Spleen (tissue), 13 donors: ENCODE measurements at regions of chr10 and their contacts with region 1.

Region 1: DNA sequence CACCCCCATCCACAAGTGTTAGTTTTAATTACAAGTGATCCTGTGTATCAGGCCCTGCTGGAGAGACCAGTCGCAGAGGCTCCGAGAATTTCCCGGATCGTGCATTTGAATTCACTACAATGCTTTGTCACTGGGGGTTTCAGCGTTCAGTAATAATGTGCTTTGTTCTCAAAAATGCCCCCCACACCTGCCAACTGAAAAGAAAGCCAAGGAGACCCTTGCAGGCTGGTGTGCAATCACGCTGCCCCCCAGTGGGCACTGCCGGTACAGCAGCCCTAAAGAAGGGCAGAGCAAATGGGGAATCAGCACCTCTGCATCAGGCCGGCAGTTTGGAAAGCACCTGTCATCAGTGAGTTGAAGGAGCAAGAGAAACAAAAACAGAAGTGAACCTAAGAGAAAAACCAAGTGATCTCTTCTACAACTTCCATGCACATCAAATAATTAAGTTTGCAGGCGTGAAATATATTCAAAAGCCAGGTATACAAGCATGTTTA is 177.6 kb downstream of the PARD3 start:
- DNase-seq: peak; percentile 85
- H3K4me3 ChIP-seq: peak overlapping the region in 1 of 8 donors; percentile 14
- H3K27ac ChIP-seq: no peak overlapping the region
- H3K4me1 ChIP-seq: peaks cover 7 to 29% (median 17%) of the 10 kb centered on the region in 6 donors
- H3K27me3 ChIP-seq: no peaks in the 10 kb centered on the region
- CTCF ChIP-seq: peak; percentile 65 to 94 (median 86)
- POLR2A ChIP-seq: no peak

Region 2: GRCh38 chr10:33180390-33180789 is 1457.1 kb before region 1 on chr10:
- intact Hi-C with region 1: loop called (anchors 10 kb)
- DNase-seq: no peak
- H3K4me3 ChIP-seq: no peak overlapping the region
- H3K27ac ChIP-seq: no peak overlapping the region
- H3K4me1 ChIP-seq: peaks cover 2 to 17% (median 10%) of the 10 kb centered on the region in 6 donors
- H3K27me3 ChIP-seq: peaks cover 0 to 10% (median 0%) of the 10 kb centered on the region in 7 donors
- CTCF ChIP-seq: no peak
- POLR2A ChIP-seq: no peak

Region 3: GRCh38 chr10:34473567-34474391 is 163.7 kb before region 1 on chr10:
- intact Hi-C with region 1: no loop called
- DNase-seq: no peak
- H3K4me3 ChIP-seq: no peak overlapping the region
- H3K27ac ChIP-seq: no peak overlapping the region
- H3K4me1 ChIP-seq: no peaks in the 10 kb centered on the region
- H3K27me3 ChIP-seq: no peaks in the 10 kb centered on the region
- CTCF ChIP-seq: no peak
- POLR2A ChIP-seq: no peak

Region 4: GRCh38 chr10:34522546-34522945 is 114.9 kb before region 1 on chr10:
- intact Hi-C with region 1: loop called (anchors 10 kb)
- DNase-seq: no peak
- H3K4me3 ChIP-seq: peak overlapping the region in 3 of 8 donors; percentile 14 to 49 (median 22)
- H3K27ac ChIP-seq: no peak overlapping the region
- H3K4me1 ChIP-seq: peaks cover 0 to 2% (median 0%) of the 10 kb centered on the region in 6 donors
- H3K27me3 ChIP-seq: no peaks in the 10 kb centered on the region
- CTCF ChIP-seq: peak in 7 of 11 experiments; percentile 28 to 50 (median 30)
- POLR2A ChIP-seq: no peak

Region 5: GRCh38 chr10:34739915-34740314 is 102.5 kb after region 1 on chr10:
- intact Hi-C with region 1: no loop called
- DNase-seq: no peak
- H3K4me3 ChIP-seq: no peak overlapping the region
- H3K27ac ChIP-seq: peak overlapping the region in 1 of 8 donors; percentile 6
- H3K4me1 ChIP-seq: peaks cover 0 to 6% (median 0%) of the 10 kb centered on the region in 6 donors
- H3K27me3 ChIP-seq: peaks cover 0 to 15% (median 0%) of the 10 kb centered on the region in 7 donors
- CTCF ChIP-seq: no peak
- POLR2A ChIP-seq: no peak

Region 6: DNA sequence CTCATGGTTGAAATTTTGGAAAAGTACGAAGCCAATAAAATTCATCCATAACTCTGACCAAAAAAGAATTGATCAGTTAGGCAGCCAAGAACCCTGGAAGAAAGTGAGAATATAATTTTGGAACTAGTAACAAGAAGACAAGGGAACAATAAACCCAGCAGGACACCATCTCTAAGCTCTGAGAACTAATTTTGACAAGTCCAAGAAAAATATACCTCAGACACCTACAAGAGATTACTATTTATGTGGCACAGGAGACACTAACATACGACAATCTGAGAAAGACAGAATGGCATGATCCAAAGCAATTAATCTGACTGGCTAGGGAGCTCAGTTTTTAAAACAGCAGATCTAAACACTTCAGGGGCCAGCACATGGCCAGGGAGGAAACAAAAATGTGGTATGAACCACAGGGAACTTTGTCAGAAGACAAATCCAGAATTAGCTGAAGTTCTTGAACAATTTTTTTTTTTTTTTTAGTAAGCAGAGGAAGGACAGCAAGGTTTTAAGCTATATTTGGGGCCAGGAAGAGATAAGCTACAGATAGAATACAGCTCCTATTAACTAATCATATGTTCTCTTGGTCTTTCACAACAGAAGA is 138.7 kb after region 1 on chr10:
- intact Hi-C with region 1: no loop called
- DNase-seq: no peak
- H3K4me3 ChIP-seq: no peak overlapping the region
- H3K27ac ChIP-seq: no peak overlapping the region
- H3K4me1 ChIP-seq: peaks cover 0 to 12% (median 7%) of the 10 kb centered on the region in 6 donors
- H3K27me3 ChIP-seq: peaks cover 0 to 5% (median 0%) of the 10 kb centered on the region in 7 donors
- CTCF ChIP-seq: no peak
- POLR2A ChIP-seq: no peak

Region 7: DNA sequence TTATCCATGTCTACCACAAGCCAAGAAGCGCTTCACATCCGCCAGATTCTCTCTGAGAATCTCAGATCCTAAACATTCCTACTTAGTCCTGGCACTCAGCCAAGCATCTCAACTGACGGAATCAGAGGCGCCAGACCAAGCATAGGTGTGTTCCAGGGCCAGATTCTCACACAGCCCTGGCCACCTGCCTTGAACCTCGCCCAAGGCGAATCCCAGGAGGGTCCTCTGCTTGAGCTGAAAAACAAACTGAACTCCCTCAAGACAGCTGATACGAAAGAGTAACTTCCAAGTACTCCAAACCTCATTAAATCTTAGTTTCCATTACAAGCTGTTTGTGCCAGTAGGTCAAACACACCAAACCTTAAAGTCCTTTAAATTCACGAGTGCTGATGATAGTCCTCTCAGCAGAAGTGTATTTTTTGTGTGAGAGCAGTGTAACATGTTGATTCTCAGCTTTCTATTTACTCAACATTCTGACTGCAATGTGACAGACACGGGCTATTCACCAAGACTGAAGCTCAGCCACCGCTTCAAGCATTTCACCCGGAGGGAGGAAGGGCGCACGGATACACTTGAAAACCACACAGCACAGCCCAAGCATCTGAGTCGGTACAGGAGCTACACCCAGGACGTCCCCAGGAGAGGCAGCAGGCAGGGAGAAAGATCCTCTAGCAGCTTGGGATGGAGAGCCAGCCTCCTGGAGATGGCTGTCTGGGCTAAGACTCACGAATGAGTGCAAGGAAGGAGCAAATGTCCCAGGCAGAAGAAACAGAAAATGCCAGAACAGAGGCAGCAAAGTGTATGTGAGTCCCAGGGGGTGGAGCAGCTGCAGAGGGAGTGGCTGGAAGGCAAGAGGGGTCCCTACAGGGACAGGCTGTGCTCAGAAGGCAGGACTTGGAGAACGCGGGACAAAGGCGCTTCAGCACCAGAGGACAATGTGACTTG is 171.6 kb after region 1 on chr10:
- intact Hi-C with region 1: no loop called
- DNase-seq: peak; percentile 53
- H3K4me3 ChIP-seq: peak overlapping the region in 1 of 8 donors; percentile 15
- H3K27ac ChIP-seq: peak overlapping the region in 1 of 8 donors; percentile 7
- H3K4me1 ChIP-seq: peaks cover 2 to 15% (median 7%) of the 10 kb centered on the region in 6 donors
- H3K27me3 ChIP-seq: peaks cover 0 to 45% (median 3%) of the 10 kb centered on the region in 7 donors
- CTCF ChIP-seq: no peak
- POLR2A ChIP-seq: no peak